H1 (cell line): ENCODE measurements at regions of chr3 and their contacts with region 1.

Region 1: GRCh38 chr3:166837535-166837934 is 542.6 kb downstream of the ZBBX start:
- DNase-seq: peak in 1 of 2 experiments; percentile 10
- H3K4me3 ChIP-seq: no peak overlapping the region
- H3K27ac ChIP-seq: no peak overlapping the region
- H3K4me1 ChIP-seq: no peaks in the 10 kb centered on the region
- H3K27me3 ChIP-seq: no peaks in the 10 kb centered on the region
- CTCF ChIP-seq: peak in 2 of 3 experiments; percentile 36 to 72; a peak in 2 of 4 replicates
- EP300 ChIP-seq: no peak
- POLR2A ChIP-seq: no peak
- RAD21 ChIP-seq: peak; percentile 57 to 59

Region 2: GRCh38 chr3:166634091-166634746 is 203.3 kb before region 1 on chr3:
- CTCF ChIA-PET with region 1: no interaction called
- POLR2A ChIA-PET with region 1: no interaction called
- DNase-seq: no peak
- H3K4me3 ChIP-seq: no peak overlapping the region
- H3K27ac ChIP-seq: no peak overlapping the region
- H3K4me1 ChIP-seq: no peaks in the 10 kb centered on the region
- H3K27me3 ChIP-seq: no peaks in the 10 kb centered on the region
- CTCF ChIP-seq: no peak
- EP300 ChIP-seq: no peak
- POLR2A ChIP-seq: no peak
- RAD21 ChIP-seq: no peak

Region 3: GRCh38 chr3:166810741-166811445 is 26.6 kb before region 1 on chr3:
- CTCF ChIA-PET with region 1: interaction called, 15 read pairs
- POLR2A ChIA-PET with region 1: no interaction called
- DNase-seq: no peak
- H3K4me3 ChIP-seq: no peak overlapping the region
- H3K27ac ChIP-seq: no peak overlapping the region
- H3K4me1 ChIP-seq: no peaks in the 10 kb centered on the region
- H3K27me3 ChIP-seq: no peaks in the 10 kb centered on the region
- CTCF ChIP-seq: no peak
- EP300 ChIP-seq: no peak
- POLR2A ChIP-seq: no peak
- RAD21 ChIP-seq: no peak

Region 4: GRCh38 chr3:167032261-167032876 is 194.8 kb after region 1 on chr3:
- CTCF ChIA-PET with region 1: interaction called, 10 read pairs
- POLR2A ChIA-PET with region 1: no interaction called
- DNase-seq: no peak
- H3K4me3 ChIP-seq: no peak overlapping the region
- H3K27ac ChIP-seq: no peak overlapping the region
- H3K4me1 ChIP-seq: no peaks in the 10 kb centered on the region
- H3K27me3 ChIP-seq: no peaks in the 10 kb centered on the region
- CTCF ChIP-seq: peak in 2 of 3 experiments; percentile 44 to 61; a peak in 2 of 4 replicates
- EP300 ChIP-seq: no peak
- POLR2A ChIP-seq: no peak
- RAD21 ChIP-seq: peak; percentile 81 to 84